Vagina (tissue), 2 donors: ENCODE measurements at regions of chr22 and their contacts with region 1.

Region 1: DNA sequence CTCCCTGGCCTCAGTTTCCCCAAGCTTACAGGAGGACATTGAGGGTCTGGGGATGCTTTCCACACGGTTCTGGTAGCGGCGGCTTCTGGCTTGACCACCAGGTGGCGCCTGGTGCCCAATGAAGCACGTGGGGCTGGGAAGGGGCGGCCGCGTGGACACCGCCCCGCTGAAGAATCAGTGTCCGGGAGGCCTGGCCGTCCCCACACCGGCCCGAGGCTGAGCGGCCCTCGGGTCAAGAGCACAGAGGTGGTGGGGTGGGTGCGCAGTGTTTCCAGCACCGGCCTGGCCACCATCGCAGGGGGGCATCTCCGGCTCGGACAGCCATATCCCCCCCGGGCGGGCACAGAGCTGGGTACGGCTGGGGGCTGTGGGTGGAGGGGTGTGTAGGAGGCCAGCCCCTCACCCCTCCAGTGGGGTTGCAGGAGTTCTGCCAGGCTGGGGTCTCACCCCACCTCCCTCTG is 27.8 kb upstream of the PPARA start:
- DNase-seq: no peak
- H3K4me3 ChIP-seq: no peak overlapping the region
- H3K27ac ChIP-seq: peak overlapping the region; percentile 13
- H3K4me1 ChIP-seq: peaks cover 23% of the 10 kb centered on the region
- H3K27me3 ChIP-seq: no peaks in the 10 kb centered on the region
- CTCF ChIP-seq: peak; percentile 89 to 96 (median 96)
- POLR2A ChIP-seq: no peak

Region 2: DNA sequence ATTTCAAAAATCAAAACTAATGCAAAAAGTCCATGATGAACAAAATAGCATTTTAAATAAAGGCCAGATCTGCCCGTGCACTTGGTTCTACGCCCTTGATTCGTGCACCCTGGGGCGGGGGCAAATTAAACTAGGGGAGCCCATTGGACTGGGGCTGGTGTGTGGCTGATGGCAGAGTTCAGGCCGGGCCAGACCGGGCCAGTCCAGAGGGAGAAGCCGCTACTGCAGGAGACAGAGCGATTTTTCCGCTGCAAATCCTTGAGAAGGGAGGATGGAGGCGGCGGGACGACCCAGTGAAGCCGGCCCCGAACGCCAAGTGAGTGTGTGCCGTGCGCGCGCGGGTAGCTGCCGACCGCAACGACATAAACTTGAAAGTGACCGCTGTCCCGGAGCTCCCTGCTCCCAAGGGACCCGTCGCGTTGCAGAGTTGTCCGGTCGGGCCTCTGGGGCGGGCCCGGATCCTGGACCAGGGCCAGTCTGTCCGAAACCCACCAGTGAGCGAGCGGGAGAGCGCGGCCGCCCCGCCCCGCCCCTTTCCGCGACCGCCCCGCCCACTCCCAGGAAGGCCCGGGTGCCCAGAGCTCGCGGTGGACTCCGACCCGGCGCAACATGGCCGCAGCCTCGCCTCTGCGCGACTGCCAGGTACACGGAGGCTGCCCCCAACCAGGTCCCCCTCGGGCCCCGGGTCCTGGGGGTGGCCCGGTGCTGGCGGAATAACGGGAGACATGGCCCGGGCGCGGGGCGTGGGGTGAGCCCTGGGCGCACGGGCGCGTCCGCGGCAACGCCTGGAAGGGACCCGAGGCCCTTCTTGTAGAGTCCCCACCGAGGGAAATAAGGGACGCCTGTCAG is 145.1 kb after region 1 on chr22 and contains the start of gene TTC38:
- intact Hi-C with region 1: loop called (anchors 10 kb)
- DNase-seq: no peak
- H3K4me3 ChIP-seq: peak within 1 kb of the TSS; percentile 61 to 94
- H3K27ac ChIP-seq: peak within 1 kb of the TSS; percentile 75
- H3K4me1 ChIP-seq: peaks cover 36% of the 10 kb centered on the region
- H3K27me3 ChIP-seq: no peaks in the 10 kb centered on the region
- CTCF ChIP-seq: no peak
- POLR2A ChIP-seq: no peak
- total RNA-seq, gene TTC38: 58.7 TPM

Region 3: DNA sequence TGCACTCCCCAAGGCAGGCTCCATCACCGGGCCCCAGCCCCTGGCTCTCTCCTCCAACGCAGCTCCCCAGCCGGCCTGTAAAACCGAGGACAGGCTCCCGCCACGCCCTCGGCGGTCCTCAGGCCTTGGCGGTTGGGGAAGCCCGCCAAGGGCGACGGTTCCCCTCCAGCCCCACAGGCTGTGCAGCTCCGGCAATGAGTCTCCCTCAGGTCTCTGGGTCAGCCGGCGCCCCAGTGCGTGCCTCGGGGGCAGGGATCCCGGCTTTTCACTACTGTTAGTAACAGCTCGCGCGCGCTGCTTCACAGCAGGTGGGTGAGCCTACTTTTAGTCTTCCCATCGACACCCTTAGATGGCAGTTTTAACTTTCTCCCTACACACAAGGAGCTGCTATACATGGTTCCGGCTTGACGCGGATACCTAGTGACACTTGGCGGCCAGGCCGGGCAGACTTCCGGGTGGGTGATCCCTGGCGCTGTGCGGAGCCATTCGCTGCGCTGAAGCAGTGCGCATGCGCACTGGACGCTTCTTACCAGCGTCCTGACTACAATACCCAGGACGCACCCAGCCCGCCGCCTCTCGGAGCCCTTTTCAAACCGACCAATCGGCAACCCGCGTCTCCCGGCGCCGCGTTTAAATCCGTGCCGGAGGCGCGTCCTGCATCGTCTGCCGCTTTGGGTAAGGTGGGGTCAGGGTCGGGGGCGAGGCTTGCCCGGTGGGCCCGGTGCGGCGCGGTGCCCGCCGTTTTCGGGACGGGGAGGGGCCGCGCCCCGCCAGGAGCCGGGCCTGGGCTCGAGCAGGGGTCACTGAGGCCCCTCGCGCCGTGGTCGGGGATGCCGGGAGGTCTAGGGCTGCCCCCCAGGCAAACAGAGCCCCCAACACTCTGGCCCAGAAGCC is 174.0 kb after region 1 on chr22 and contains the start of gene GTSE1:
- intact Hi-C with region 1: loop called (anchors 5 kb)
- DNase-seq: peak in 1 of 2 donors; percentile 95
- H3K4me3 ChIP-seq: peak within 1 kb of the TSS; percentile 60 to 66
- H3K27ac ChIP-seq: peak within 1 kb of the TSS; percentile 93
- H3K4me1 ChIP-seq: peaks cover 20% of the 10 kb centered on the region
- H3K27me3 ChIP-seq: no peaks in the 10 kb centered on the region
- CTCF ChIP-seq: peak in 1 of 3 experiments; percentile 24
- POLR2A ChIP-seq: no peak
- total RNA-seq, gene GTSE1: 2.2 TPM

Region 4: GRCh38 chr22:46317646-46318045 is 195.1 kb after region 1 on chr22:
- intact Hi-C with region 1: loop called (anchors 5 kb)
- DNase-seq: no peak
- H3K4me3 ChIP-seq: no peak overlapping the region
- H3K27ac ChIP-seq: no peak overlapping the region
- H3K4me1 ChIP-seq: no peaks in the 10 kb centered on the region
- H3K27me3 ChIP-seq: no peaks in the 10 kb centered on the region
- CTCF ChIP-seq: no peak
- POLR2A ChIP-seq: no peak

Region 5: DNA sequence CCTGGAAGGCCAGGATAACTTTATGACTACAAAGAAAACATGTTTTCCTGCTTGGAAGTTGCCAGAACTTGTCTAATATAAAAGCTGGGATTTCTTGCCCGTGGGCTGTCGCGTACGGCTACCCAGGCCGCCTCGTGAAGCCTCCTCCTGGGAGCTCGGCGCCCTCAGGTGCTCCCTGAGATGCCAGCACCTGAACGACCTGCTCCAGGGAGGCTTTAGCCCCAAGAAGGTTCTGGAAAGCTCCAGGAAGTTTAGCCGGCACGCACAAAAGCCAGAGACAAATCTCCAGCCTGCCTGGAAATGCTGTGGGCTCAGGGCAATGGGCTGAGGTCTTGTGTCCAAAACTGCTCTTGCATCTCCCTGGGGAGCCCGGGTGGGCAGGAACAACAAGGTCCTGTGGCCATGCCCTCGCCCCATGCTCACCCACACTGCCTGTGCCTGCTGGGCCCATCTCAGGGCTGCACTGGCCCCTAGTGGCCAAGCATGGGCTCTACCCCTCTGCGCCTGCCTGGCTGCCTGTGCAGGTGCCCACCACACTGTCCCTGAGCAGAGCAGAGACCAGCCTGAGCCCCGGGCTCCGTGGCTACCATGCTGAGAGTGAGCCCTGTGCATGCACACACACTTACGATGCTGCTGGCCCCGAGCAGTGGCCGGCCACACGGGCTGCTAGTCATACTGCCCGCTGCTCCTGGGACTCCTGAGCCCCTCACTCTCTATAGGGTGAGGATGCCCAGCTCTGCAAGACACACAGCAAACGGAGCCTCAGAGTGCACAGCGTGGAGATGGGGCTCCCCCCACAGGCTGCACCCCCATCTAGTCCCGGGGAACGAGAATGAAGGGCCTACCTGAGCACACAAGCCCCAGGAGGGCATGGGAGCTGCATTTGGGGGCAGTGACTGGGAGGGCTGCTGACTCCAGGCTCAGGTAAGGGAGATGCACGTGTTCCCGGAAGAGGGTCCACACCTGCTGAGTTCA is 419.8 kb after region 1 on chr22:
- intact Hi-C with region 1: loop called (anchors 10 kb)
- DNase-seq: peak in 1 of 2 donors; percentile 91
- H3K4me3 ChIP-seq: no peak overlapping the region
- H3K27ac ChIP-seq: peak overlapping the region; percentile 72
- H3K4me1 ChIP-seq: peaks cover 42% of the 10 kb centered on the region
- H3K27me3 ChIP-seq: no peaks in the 10 kb centered on the region
- CTCF ChIP-seq: peak; percentile 83 to 87 (median 86)
- POLR2A ChIP-seq: no peak